Activated naive CD4-positive, alpha-beta T cell treated with anti-CD3 and anti-CD28 coated beads for 36 hours (primary cell): ENCODE measurements at regions of chr5 and their contacts with region 1.

Region 1: GRCh38 chr5:96963267-96963666 is 27.4 kb downstream of the LNPEP start:
- DNase-seq: peak; percentile 47
- H3K4me3 Mint-ChIP-seq: peak overlapping the region; percentile 69
- H3K27ac Mint-ChIP-seq: peak overlapping the region; percentile 95
- H3K4me1 Mint-ChIP-seq: peaks cover 73% of the 10 kb centered on the region
- H3K27me3 Mint-ChIP-seq: no peaks in the 10 kb centered on the region

Region 2: DNA sequence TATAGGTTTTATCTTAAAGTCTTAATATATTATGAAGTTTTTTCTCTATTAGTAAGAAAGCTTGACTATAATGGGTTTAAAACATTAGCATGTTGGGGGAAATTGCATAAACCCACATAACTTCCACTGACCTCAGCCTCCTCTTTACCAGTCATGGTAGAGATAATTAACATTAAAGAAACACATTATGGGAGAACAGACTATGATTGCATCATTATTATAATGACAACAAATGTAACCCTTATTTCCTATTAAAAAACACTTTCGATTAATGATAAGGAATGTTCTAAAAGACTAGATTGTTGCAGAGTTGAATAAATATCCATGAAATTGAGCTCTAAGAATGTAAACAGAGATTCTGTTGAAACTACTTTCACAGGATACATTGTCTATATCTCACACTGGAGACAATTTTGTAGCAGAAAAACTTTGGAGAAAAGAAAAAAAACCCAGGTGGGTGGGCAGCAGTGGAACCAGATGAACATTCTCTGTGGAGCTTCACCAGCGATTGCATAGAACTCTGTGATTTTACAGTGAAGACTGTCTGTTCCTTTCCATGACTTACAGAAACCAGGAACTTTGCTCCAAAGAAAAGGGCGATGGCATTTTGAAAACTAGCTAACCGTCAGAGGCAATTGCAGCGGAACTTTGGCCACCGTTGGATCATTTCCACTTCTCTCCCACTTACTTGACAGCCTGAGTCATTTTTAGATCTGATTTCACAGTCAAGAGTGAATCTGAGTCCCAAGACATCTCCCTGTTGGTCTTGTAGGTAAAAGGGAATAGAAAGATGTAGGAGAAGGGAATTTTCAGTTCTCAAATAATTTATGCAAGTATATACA is 108.0 kb before region 1 on chr5:
- CTCF ChIA-PET with region 1: no interaction called
- intact Hi-C with region 1: no loop called
- DNase-seq: no peak
- H3K4me3 Mint-ChIP-seq: no peak overlapping the region
- H3K27ac Mint-ChIP-seq: no peak overlapping the region
- H3K4me1 Mint-ChIP-seq: no peaks in the 10 kb centered on the region
- H3K27me3 Mint-ChIP-seq: no peaks in the 10 kb centered on the region

Region 3: GRCh38 chr5:96973532-96974401 is 10.5 kb after region 1 on chr5:
- CTCF ChIA-PET with region 1: interaction called, 7 read pairs
- intact Hi-C with region 1: loop called (anchors 1 kb)
- DNase-seq: no peak
- H3K4me3 Mint-ChIP-seq: no peak overlapping the region
- H3K27ac Mint-ChIP-seq: no peak overlapping the region
- H3K4me1 Mint-ChIP-seq: peaks cover 69% of the 10 kb centered on the region
- H3K27me3 Mint-ChIP-seq: no peaks in the 10 kb centered on the region